ENCODE measurements at regions of chr6 and their contacts with region 1.

Region 1: GRCh38 chr6:17907406-17908229 is 79.8 kb downstream of the KIF13A start:
- DNase-seq: peak; percentile 94 to 96
- ATAC-seq: peak; percentile 93
- H3K4me3 ChIP-seq: peak overlapping the region in 1 of 4 donors; percentile 23
- H3K27ac ChIP-seq: peak overlapping the region; percentile 88 to 94 (median 89)
- H3K4me1 ChIP-seq: peaks cover 85 to 87% of the 10 kb centered on the region in 2 donors
- H3K27me3 ChIP-seq: no peaks in the 10 kb centered on the region
- CTCF ChIP-seq: peak in 1 of 5 experiments; percentile 19
- POLR2A ChIP-seq: peak in 1 of 2 donors; percentile 44

Region 2: GRCh38 chr6:17865798-17866725 is 41.6 kb before region 1 on chr6:
- in situ Hi-C with region 1: no loop called
- intact Hi-C with region 1: loop called (anchors 1 kb)
- DNase-seq: peak; percentile 85 to 93
- ATAC-seq: peak; percentile 98
- H3K4me3 ChIP-seq: no peak overlapping the region
- H3K27ac ChIP-seq: peak overlapping the region; percentile 81 to 88 (median 86)
- H3K4me1 ChIP-seq: peaks cover 46 to 68% of the 10 kb centered on the region in 2 donors
- H3K27me3 ChIP-seq: no peaks in the 10 kb centered on the region
- CTCF ChIP-seq: no peak
- POLR2A ChIP-seq: no peak

Region 3: GRCh38 chr6:17877196-17877889 is 30.3 kb before region 1 on chr6:
- in situ Hi-C with region 1: no loop called
- intact Hi-C with region 1: no loop called
- DNase-seq: no peak
- ATAC-seq: no peak
- H3K4me3 ChIP-seq: no peak overlapping the region
- H3K27ac ChIP-seq: no peak overlapping the region
- H3K4me1 ChIP-seq: peaks cover 27 to 30% of the 10 kb centered on the region in 2 donors
- H3K27me3 ChIP-seq: no peaks in the 10 kb centered on the region
- CTCF ChIP-seq: no peak
- POLR2A ChIP-seq: no peak

Region 4: DNA sequence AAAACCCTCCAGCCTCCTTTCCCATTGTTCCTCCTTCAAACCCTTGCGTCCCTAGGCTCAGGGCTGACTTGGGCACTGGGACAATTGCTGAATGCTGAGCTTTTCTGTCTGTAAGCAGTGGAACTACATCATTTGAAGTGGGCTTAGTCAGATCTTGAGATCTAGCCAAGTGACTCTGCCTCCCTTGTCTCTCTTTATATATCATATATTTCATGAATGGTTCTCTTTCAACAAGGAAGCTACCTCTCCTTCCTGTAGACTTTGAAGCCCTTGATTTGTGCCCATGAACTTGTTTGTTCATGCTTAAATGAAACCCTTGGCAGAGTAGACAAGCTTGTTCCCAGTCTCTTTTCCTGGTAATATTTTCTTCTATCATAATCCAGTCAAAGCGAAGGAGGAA is 139.8 kb after region 1 on chr6:
- in situ Hi-C with region 1: no loop called
- intact Hi-C with region 1: no loop called
- DNase-seq: no peak
- ATAC-seq: no peak
- H3K4me3 ChIP-seq: no peak overlapping the region
- H3K27ac ChIP-seq: no peak overlapping the region
- H3K4me1 ChIP-seq: no peaks in the 10 kb centered on the region
- H3K27me3 ChIP-seq: no peaks in the 10 kb centered on the region
- CTCF ChIP-seq: no peak
- POLR2A ChIP-seq: no peak

Measured in gastrocnemius medialis (tissue), 4 donors.